PC-3 (cell line): ENCODE measurements at regions of chr13 and their contacts with region 1.

Region 1: GRCh38 chr13:106038752-106039151 is 496.7 kb downstream of the EFNB2 start:
- DNase-seq: peak; percentile 63
- ATAC-seq: peak; percentile 95
- H3K4me3 ChIP-seq: no peak overlapping the region
- H3K27ac ChIP-seq: peak overlapping the region; percentile 26; the same call in 1 of the 2 replicates
- H3K4me1 ChIP-seq: peaks cover 4% of the 10 kb centered on the region; the same call in 1 of the 2 replicates
- H3K27me3 ChIP-seq: no peaks in the 10 kb centered on the region
- CTCF ChIP-seq: no peak

Region 2: GRCh38 chr13:106063591-106064313 is 25.0 kb after region 1 on chr13:
- CTCF ChIA-PET with region 1: no interaction called
- POLR2A ChIA-PET with region 1: no interaction called
- intact Hi-C with region 1: loop called (anchors 1 kb)
- DNase-seq: peak; percentile 41
- ATAC-seq: no peak
- H3K4me3 ChIP-seq: no peak overlapping the region
- H3K27ac ChIP-seq: no peak overlapping the region
- H3K4me1 ChIP-seq: no peaks in the 10 kb centered on the region
- H3K27me3 ChIP-seq: no peaks in the 10 kb centered on the region
- CTCF ChIP-seq: no peak